Dendritic cell treated with granulocyte-macrophage colony-stimulating factor and Interleukin-4, amounts not matched to agents 40 ng/mL and 50 ng/mL, for 4 days (primary cell): ENCODE measurements at regions of chr2 and their contacts with region 1.

Region 1: GRCh38 chr2:32277674-32278482 is at the start of gene YIPF4:
- H3K4me3 Mint-ChIP-seq: peak within 1 kb of the TSS; percentile 88
- H3K27ac Mint-ChIP-seq: peak within 1 kb of the TSS; percentile 94
- H3K4me1 Mint-ChIP-seq: peaks cover 25% of the 10 kb centered on the region
- H3K27me3 Mint-ChIP-seq: peaks cover 2% of the 10 kb centered on the region

Region 2: DNA sequence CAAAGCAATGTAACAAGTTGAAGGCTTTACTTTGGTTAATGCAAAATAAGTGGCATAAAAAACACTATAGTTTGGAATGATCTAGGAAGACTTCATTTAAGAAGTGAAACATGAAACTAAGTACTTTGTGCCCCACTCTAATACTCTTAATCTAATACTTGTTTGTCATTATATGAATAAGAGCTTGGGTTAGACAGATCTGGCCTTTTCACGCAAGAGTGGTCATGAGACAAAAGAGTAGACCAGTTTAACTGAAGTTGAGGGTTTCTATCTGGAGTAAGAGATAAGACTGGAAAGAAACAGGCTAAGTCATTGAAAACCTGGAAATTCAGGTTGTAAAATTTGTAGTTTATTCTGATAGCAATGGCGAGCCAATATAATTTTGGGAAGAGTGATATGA is 109.4 kb before region 1 on chr2:
- intact Hi-C with region 1: loop called (anchors 5 kb)
- H3K4me3 Mint-ChIP-seq: no peak overlapping the region
- H3K27ac Mint-ChIP-seq: no peak overlapping the region
- H3K4me1 Mint-ChIP-seq: peaks cover 28% of the 10 kb centered on the region
- H3K27me3 Mint-ChIP-seq: no peaks in the 10 kb centered on the region

Region 3: GRCh38 chr2:32264422-32265105 is 13.3 kb before region 1 on chr2 and contains the start of gene NLRC4:
- intact Hi-C with region 1: loop called (anchors 2 kb)
- H3K4me3 Mint-ChIP-seq: peak within 1 kb of the TSS; percentile 74
- H3K27ac Mint-ChIP-seq: peak within 1 kb of the TSS; percentile 94
- H3K4me1 Mint-ChIP-seq: peaks cover 53% of the 10 kb centered on the region
- H3K27me3 Mint-ChIP-seq: no peaks in the 10 kb centered on the region

Region 4: GRCh38 chr2:32356735-32357644 is 79.1 kb after region 1 on chr2 and contains the start of gene BIRC6:
- intact Hi-C with region 1: loop called (anchors 5 kb)
- H3K4me3 Mint-ChIP-seq: peak within 1 kb of the TSS; percentile 94
- H3K27ac Mint-ChIP-seq: peak within 1 kb of the TSS; percentile 94
- H3K4me1 Mint-ChIP-seq: peaks cover 34% of the 10 kb centered on the region
- H3K27me3 Mint-ChIP-seq: no peaks in the 10 kb centered on the region